Left cardiac atrium (tissue), 4 donors: ENCODE measurements at regions of chr2 and their contacts with region 1.

Region 1: DNA sequence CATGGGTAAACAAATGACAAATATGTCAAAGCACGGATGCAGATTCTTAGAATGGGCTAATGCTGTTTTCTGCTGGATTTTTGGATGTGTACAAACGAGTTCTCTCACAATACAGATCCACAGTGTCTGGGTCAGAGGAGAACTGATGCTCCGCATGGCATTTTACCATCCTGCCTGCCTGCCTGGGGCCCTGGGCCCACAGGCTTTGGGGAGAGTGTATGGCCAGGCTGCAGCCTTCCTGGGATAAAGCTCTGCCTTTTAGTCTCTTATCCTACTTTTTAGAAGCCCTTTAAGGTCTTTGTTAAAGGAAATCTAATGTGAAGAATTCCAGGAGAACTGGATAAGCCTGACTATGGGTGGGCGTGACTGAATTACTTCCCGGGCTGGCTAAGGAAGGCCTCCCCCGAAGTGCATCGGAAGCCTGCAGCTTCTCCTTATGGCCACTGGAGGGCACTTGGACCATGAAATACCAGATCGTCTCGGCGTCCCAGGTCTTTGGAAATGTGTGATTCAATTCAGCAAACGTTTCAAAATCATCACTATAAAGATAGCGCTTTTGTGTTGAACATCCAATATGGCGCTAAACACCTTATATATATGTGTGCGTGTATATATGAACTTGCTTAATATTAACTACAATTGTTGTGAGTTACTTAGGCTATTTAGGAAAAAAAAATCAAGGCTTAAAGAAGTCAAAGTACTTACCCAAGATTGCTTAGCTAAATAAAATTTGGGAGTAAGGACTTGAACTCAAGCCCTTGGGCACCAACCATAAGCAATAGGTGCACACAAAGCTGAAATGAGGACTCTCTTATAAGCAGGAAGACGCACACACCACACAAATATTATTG is 15.2 kb upstream of the DNPEP start:
- DNase-seq: peak; percentile 81
- ATAC-seq: peak; percentile 23 to 36

Region 2: DNA sequence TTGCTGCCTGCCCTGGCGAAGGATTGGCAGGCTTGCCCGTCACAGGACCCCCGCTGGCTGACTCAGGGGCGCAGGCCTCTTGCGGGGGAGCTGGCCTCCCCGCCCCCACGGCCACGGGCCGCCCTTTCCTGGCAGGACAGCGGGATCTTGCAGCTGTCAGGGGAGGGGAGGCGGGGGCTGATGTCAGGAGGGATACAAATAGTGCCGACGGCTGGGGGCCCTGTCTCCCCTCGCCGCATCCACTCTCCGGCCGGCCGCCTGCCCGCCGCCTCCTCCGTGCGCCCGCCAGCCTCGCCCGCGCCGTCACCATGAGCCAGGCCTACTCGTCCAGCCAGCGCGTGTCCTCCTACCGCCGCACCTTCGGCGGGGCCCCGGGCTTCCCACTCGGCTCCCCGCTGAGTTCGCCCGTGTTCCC is 15.3 kb after region 1 on chr2 and contains the start of gene DES:
- intact Hi-C with region 1: loop called in 1 of 2 experiments (anchors 2 kb)
- DNase-seq: peak; percentile 70
- ATAC-seq: peak; percentile 68 to 78
- total RNA-seq, gene DES: 5,895 to 7,519 TPM

Region 3: GRCh38 chr2:219520079-219520478 is 117.2 kb after region 1 on chr2:
- intact Hi-C with region 1: no loop called
- DNase-seq: no peak
- ATAC-seq: peak; percentile 45 to 48

Region 4: GRCh38 chr2:219530048-219530963 is 127.4 kb after region 1 on chr2:
- intact Hi-C with region 1: loop called (anchors 2 to 5 kb)
- DNase-seq: peak; percentile 84
- ATAC-seq: peak; percentile 77 to 84

Region 5: GRCh38 chr2:219698693-219699439 is 296.0 kb after region 1 on chr2:
- intact Hi-C with region 1: loop called in 1 of 2 experiments (anchors 5 kb)
- DNase-seq: no peak
- ATAC-seq: no peak